ENCODE measurements at regions of chr2 and their contacts with region 1.

Region 1: DNA sequence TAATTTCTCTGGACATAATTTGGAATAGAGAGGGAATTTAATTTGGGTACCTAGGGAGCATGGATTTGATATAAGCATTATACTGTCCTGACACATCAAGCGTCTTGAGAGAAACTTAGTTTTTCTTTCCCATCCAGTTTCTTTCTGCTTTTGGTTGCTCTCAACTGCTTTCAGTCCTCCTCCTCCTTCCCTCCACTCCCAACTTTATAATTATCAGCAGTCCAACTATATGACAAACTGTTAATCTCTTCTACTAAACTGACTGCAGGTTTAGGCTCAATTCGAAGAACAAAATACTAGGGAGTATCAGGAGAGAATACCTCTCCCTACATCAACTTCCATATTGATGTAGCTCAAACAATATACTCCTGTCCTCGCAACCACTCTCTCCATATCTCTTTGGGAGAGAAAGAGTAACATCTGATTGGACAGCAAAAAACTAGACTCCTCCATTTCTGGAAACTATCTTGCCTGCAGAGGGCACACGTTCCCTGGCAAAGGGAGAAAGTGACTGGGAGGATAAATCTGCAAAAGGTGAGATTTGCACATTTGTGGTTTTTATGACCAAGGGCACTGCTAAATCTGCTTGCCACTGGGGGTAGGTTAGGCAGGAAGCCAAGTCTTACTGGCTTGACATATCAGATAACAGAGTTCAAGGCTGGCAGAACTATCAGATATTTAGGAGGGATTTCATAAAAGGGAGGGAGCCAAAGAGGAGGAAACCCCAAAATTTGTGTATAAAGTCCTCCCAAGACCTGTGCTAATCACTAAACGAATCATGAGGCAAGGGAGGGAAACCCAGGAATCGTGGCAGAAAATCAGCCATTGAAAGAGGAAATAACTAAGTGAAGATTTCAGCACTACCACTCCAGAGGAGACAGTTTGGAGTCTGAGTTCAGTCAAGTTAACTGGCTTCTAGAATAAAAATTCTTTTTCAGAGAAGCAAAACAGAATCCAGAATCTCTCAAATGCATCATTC is 40.0 kb downstream of the ICA1L start:
- DNase-seq: peak; percentile 84
- H3K4me3 ChIP-seq: no peak overlapping the region
- H3K27ac ChIP-seq: no peak overlapping the region
- H3K4me1 ChIP-seq: no peaks in the 10 kb centered on the region
- H3K27me3 ChIP-seq: no peaks in the 10 kb centered on the region
- CTCF ChIP-seq: peak; percentile 81

Region 2: GRCh38 chr2:202790676-202791075 is 40.9 kb before region 1 on chr2:
- CTCF ChIA-PET with region 1: no interaction called
- POLR2A ChIA-PET with region 1: no interaction called
- intact Hi-C with region 1: no loop called
- DNase-seq: no peak
- H3K4me3 ChIP-seq: no peak overlapping the region
- H3K27ac ChIP-seq: no peak overlapping the region
- H3K4me1 ChIP-seq: no peaks in the 10 kb centered on the region
- H3K27me3 ChIP-seq: no peaks in the 10 kb centered on the region
- CTCF ChIP-seq: no peak

Region 3: DNA sequence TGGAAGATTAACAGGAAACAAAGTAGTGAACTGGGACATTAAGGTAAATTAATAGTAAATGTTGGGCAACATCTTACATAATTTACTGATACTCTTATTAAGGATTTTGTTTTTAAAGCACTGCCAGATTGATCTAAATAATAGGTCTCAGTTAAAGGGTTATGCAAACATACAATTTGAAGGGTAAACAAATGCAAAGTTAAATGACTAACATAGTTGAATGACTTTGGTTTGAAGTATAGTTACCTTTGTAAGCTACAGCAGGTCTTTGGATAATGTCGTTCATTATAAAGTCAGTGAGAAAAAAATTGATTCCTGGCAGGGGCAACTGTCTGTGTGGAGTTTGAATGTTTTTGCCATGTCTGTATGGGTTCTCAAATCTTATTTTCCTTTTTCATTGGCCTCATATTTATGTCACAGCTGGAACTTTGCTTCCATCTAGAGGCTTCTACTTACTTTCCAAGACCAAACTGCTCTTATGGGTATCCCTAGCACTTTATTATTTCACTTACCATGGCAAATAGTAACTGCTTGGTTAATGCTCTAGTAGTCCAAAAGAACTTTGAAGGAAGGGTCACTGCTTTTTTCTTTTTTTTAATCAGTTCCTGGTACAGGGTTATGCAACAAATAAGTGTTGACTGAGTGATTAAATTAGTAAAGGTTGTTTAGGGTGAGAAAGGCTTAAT is 290.9 kb after region 1 on chr2:
- CTCF ChIA-PET with region 1: no interaction called
- POLR2A ChIA-PET with region 1: no interaction called
- intact Hi-C with region 1: loop called (anchors 5 kb)
- DNase-seq: peak; percentile 27
- H3K4me3 ChIP-seq: no peak overlapping the region
- H3K27ac ChIP-seq: no peak overlapping the region
- H3K4me1 ChIP-seq: no peaks in the 10 kb centered on the region
- H3K27me3 ChIP-seq: no peaks in the 10 kb centered on the region
- CTCF ChIP-seq: peak; percentile 42; the same call in 1 of the 2 replicates

Region 4: GRCh38 chr2:203261326-203262159 is 430.0 kb after region 1 on chr2:
- CTCF ChIA-PET with region 1: no interaction called
- POLR2A ChIA-PET with region 1: no interaction called
- intact Hi-C with region 1: no loop called
- DNase-seq: peak; percentile 6
- H3K4me3 ChIP-seq: no peak overlapping the region
- H3K27ac ChIP-seq: no peak overlapping the region
- H3K4me1 ChIP-seq: no peaks in the 10 kb centered on the region
- H3K27me3 ChIP-seq: no peaks in the 10 kb centered on the region
- CTCF ChIP-seq: no peak

Region 5: DNA sequence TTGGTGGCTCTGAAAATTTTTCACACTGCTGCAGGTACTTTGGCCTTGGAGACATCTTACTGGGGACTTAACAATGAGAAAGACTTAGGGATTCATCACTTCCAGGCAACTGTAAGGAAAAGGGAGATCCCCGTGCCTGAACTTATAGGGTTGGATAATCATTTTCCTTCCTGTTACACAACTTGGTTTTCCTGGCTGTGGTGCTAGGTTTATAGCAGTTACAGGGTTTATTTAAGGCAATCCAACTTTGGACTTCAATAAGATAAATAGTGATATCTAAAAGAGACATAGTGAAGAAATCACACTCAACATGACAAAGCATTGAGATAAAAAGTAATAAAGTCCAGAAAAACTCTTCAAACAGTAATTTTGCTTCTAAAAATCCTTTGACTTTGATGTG is 773.8 kb after region 1 on chr2:
- CTCF ChIA-PET with region 1: no interaction called
- POLR2A ChIA-PET with region 1: no interaction called
- intact Hi-C with region 1: no loop called
- DNase-seq: no peak
- H3K4me3 ChIP-seq: no peak overlapping the region
- H3K27ac ChIP-seq: no peak overlapping the region
- H3K4me1 ChIP-seq: no peaks in the 10 kb centered on the region
- H3K27me3 ChIP-seq: no peaks in the 10 kb centered on the region
- CTCF ChIP-seq: no peak